ENCODE measurements at regions of chr6 and their contacts with region 1.

Region 1: GRCh38 chr6:7238900-7239589 is 74.0 kb downstream of the SSR1 start:
- DNase-seq: peak; percentile 83
- ATAC-seq: peak; percentile 34; the same call in 1 of the 2 replicates
- H3K4me3 ChIP-seq: no peak overlapping the region
- H3K27ac ChIP-seq: peak overlapping the region; percentile 18; the same call in 1 of the 2 replicates
- H3K4me1 ChIP-seq: peaks cover 55% of the 10 kb centered on the region
- H3K27me3 ChIP-seq: no peaks in the 10 kb centered on the region
- CTCF ChIP-seq: peak; percentile 87

Region 2: GRCh38 chr6:6676910-6677441 is 562.1 kb before region 1 on chr6:
- CTCF ChIA-PET with region 1: no interaction called
- POLR2A ChIA-PET with region 1: no interaction called
- intact Hi-C with region 1: loop called (anchors 1 kb)
- DNase-seq: peak; percentile 93
- ATAC-seq: peak; percentile 74
- H3K4me3 ChIP-seq: no peak overlapping the region
- H3K27ac ChIP-seq: peak overlapping the region; percentile 36
- H3K4me1 ChIP-seq: peaks cover 17% of the 10 kb centered on the region
- H3K27me3 ChIP-seq: peaks cover 4% of the 10 kb centered on the region; the same call in 1 of the 2 replicates
- CTCF ChIP-seq: peak; percentile 96

Region 3: GRCh38 chr6:6918216-6918983 is 320.6 kb before region 1 on chr6:
- CTCF ChIA-PET with region 1: no interaction called
- POLR2A ChIA-PET with region 1: no interaction called
- intact Hi-C with region 1: loop called (anchors 5 kb)
- DNase-seq: peak; percentile 75
- ATAC-seq: peak; percentile 45
- H3K4me3 ChIP-seq: no peak overlapping the region
- H3K27ac ChIP-seq: peak overlapping the region; percentile 73
- H3K4me1 ChIP-seq: peaks cover 42% of the 10 kb centered on the region
- H3K27me3 ChIP-seq: no peaks in the 10 kb centered on the region
- CTCF ChIP-seq: no peak

Region 4: GRCh38 chr6:7058250-7058923 is 180.7 kb before region 1 on chr6:
- CTCF ChIA-PET with region 1: no interaction called
- POLR2A ChIA-PET with region 1: no interaction called
- intact Hi-C with region 1: loop called (anchors 5 kb)
- DNase-seq: peak; percentile 98
- ATAC-seq: peak; percentile 97
- H3K4me3 ChIP-seq: no peak overlapping the region
- H3K27ac ChIP-seq: peak overlapping the region; percentile 91
- H3K4me1 ChIP-seq: peaks cover 49% of the 10 kb centered on the region
- H3K27me3 ChIP-seq: no peaks in the 10 kb centered on the region
- CTCF ChIP-seq: no peak

Region 5: GRCh38 chr6:7201688-7202541 is 37.1 kb before region 1 on chr6:
- CTCF ChIA-PET with region 1: no interaction called
- POLR2A ChIA-PET with region 1: no interaction called
- intact Hi-C with region 1: no loop called
- DNase-seq: no peak
- ATAC-seq: no peak
- H3K4me3 ChIP-seq: no peak overlapping the region
- H3K27ac ChIP-seq: no peak overlapping the region
- H3K4me1 ChIP-seq: peaks cover 14% of the 10 kb centered on the region
- H3K27me3 ChIP-seq: no peaks in the 10 kb centered on the region
- CTCF ChIP-seq: no peak

Measured in PC-3 (cell line).